ENCODE measurements at regions of chr7 and their contacts with region 1.

Region 1: GRCh38 chr7:100132697-100133151 is 6.0 kb downstream of the MBLAC1 start:
- DNase-seq: peak; percentile 75
- H3K4me3 Mint-ChIP-seq: no peak overlapping the region
- H3K27ac Mint-ChIP-seq: no peak overlapping the region
- H3K4me1 Mint-ChIP-seq: peaks cover 22% of the 10 kb centered on the region
- H3K27me3 Mint-ChIP-seq: peaks cover 3% of the 10 kb centered on the region

Region 2: GRCh38 chr7:100071018-100071723 is 61.6 kb before region 1 on chr7:
- CTCF ChIA-PET with region 1: no interaction called
- POLR2A ChIA-PET with region 1: no interaction called
- DNase-seq: no peak
- H3K4me3 Mint-ChIP-seq: no peak overlapping the region
- H3K27ac Mint-ChIP-seq: no peak overlapping the region
- H3K4me1 Mint-ChIP-seq: no peaks in the 10 kb centered on the region
- H3K27me3 Mint-ChIP-seq: no peaks in the 10 kb centered on the region

Region 3: DNA sequence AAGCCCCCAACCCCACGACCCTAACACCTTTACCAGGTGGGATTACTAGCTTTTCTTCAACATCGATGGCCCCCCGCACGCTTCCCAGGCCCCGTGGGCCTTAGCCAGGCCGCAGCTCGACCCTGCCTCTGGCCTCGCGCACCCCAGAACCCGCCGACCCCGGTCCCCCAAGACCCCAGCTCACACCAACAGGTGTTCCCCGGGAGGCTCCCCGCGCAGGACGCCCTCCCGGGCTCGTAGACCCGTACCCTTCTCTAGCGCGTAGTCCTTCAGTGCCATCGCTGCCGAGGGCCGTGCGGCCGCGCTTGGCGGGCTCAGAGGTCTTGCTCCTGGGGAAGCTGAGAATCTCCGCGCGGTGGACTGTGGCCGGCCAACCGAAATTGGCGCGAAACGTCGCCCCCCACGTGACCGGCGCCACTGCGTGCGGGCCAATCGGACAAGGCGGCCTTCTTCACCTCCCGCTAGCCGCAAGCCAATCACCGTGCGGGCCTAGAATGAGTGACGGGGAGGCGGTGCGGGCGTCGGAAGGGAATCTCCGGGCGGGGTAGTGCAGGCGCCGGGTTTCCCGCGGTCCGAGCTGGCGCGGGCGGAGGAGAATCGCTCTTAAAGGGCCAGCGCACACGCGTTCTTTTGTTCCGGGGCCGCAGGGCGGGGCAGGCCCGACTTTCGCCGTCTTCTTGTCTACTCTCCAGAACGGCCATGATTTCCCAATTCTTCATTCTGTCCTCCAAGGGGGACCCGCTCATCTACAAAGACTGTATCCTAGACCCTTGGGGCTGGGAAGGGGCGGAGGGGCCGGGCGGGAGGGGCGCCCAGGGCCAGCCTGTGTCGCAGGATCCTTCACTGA is 31.5 kb before region 1 on chr7 and contains the starts of genes AP4M1 and MCM7:
- CTCF ChIA-PET with region 1: interaction called, 14 read pairs
- POLR2A ChIA-PET with region 1: interaction called, 32 read pairs
- DNase-seq: peak; percentile 99
- H3K4me3 Mint-ChIP-seq: peak within 1 kb of the TSS; percentile 84
- H3K27ac Mint-ChIP-seq: peak within 1 kb of the TSS; percentile 90
- H3K4me1 Mint-ChIP-seq: peaks cover 42% of the 10 kb centered on the region
- H3K27me3 Mint-ChIP-seq: no peaks in the 10 kb centered on the region
- total RNA-seq, gene AP4M1: 10.6 to 15.2 TPM
- total RNA-seq, gene MCM7: 266 to 273 TPM

Region 4: GRCh38 chr7:100148559-100149350 is 16.0 kb after region 1 on chr7 and contains the start of gene LAMTOR4:
- CTCF ChIA-PET with region 1: interaction called, 8 read pairs
- POLR2A ChIA-PET with region 1: interaction called, 13 read pairs
- DNase-seq: peak; percentile 99
- H3K4me3 Mint-ChIP-seq: peak within 1 kb of the TSS; percentile 96
- H3K27ac Mint-ChIP-seq: peak within 1 kb of the TSS; percentile 92
- H3K4me1 Mint-ChIP-seq: peaks cover 37% of the 10 kb centered on the region
- H3K27me3 Mint-ChIP-seq: no peaks in the 10 kb centered on the region
- total RNA-seq, gene LAMTOR4: 164 to 167 TPM

Region 5: GRCh38 chr7:100190048-100190711 is 57.5 kb after region 1 on chr7:
- CTCF ChIA-PET with region 1: interaction called, 13 read pairs
- POLR2A ChIA-PET with region 1: no interaction called
- DNase-seq: no peak
- H3K4me3 Mint-ChIP-seq: no peak overlapping the region
- H3K27ac Mint-ChIP-seq: peak overlapping the region; percentile 50
- H3K4me1 Mint-ChIP-seq: peaks cover 16% of the 10 kb centered on the region
- H3K27me3 Mint-ChIP-seq: no peaks in the 10 kb centered on the region

Region 6: GRCh38 chr7:100215895-100216294 is 83.2 kb after region 1 on chr7:
- CTCF ChIA-PET with region 1: interaction called, 64 read pairs
- POLR2A ChIA-PET with region 1: interaction called, 5 read pairs
- DNase-seq: no peak
- H3K4me3 Mint-ChIP-seq: no peak overlapping the region
- H3K27ac Mint-ChIP-seq: no peak overlapping the region
- H3K4me1 Mint-ChIP-seq: peaks cover 50% of the 10 kb centered on the region
- H3K27me3 Mint-ChIP-seq: no peaks in the 10 kb centered on the region

Measured in activated CD4-positive, alpha-beta memory T cell treated with anti-CD3 and anti-CD28 coated beads, Interleukin-2, amount 10 ng/mL, durations not matched to agents 7 days and 5 days (primary cell).